H1 (cell line): ENCODE measurements at regions of chr13 and their contacts with region 1.

Region 1: GRCh38 chr13:27339299-27339698 is 68.7 kb downstream of the RASL11A start:
- DNase-seq: peak in 1 of 2 experiments; percentile 77
- H3K4me3 ChIP-seq: no peak overlapping the region; a peak in 1 of 8 replicates
- H3K27ac ChIP-seq: no peak overlapping the region
- H3K4me1 ChIP-seq: peaks cover 7 to 22% (median 11%) of the 10 kb centered on the region in 4 experiments
- H3K27me3 ChIP-seq: peaks cover 0 to 3% (median 1%) of the 10 kb centered on the region in 4 experiments; a peak in 2 of 7 replicates
- CTCF ChIP-seq: peak; percentile 64 to 81 (median 70)
- EP300 ChIP-seq: no peak
- POLR2A ChIP-seq: no peak
- RAD21 ChIP-seq: peak; percentile 53

Region 2: GRCh38 chr13:27296496-27296895 is 42.8 kb before region 1 on chr13:
- CTCF ChIA-PET with region 1: interaction called, 10 read pairs
- POLR2A ChIA-PET with region 1: interaction called, 3 read pairs
- DNase-seq: no peak
- H3K4me3 ChIP-seq: no peak overlapping the region
- H3K27ac ChIP-seq: no peak overlapping the region
- H3K4me1 ChIP-seq: no peaks in the 10 kb centered on the region
- H3K27me3 ChIP-seq: no peaks in the 10 kb centered on the region
- CTCF ChIP-seq: no peak
- EP300 ChIP-seq: no peak
- POLR2A ChIP-seq: no peak
- RAD21 ChIP-seq: no peak

Region 3: GRCh38 chr13:27329210-27329609 is 10.1 kb before region 1 on chr13:
- CTCF ChIA-PET with region 1: interaction called, 10 read pairs
- POLR2A ChIA-PET with region 1: no interaction called
- DNase-seq: no peak
- H3K4me3 ChIP-seq: no peak overlapping the region
- H3K27ac ChIP-seq: no peak overlapping the region
- H3K4me1 ChIP-seq: no peaks in the 10 kb centered on the region
- H3K27me3 ChIP-seq: no peaks in the 10 kb centered on the region
- CTCF ChIP-seq: no peak
- EP300 ChIP-seq: no peak
- POLR2A ChIP-seq: no peak
- RAD21 ChIP-seq: no peak

Region 4: GRCh38 chr13:27353166-27353583 is 13.9 kb after region 1 on chr13:
- CTCF ChIA-PET with region 1: interaction called, 95 read pairs
- POLR2A ChIA-PET with region 1: interaction called, 3 read pairs
- DNase-seq: no peak
- H3K4me3 ChIP-seq: no peak overlapping the region
- H3K27ac ChIP-seq: no peak overlapping the region
- H3K4me1 ChIP-seq: peaks cover 2 to 7% (median 5%) of the 10 kb centered on the region in 4 experiments; a peak in 5 of 7 replicates
- H3K27me3 ChIP-seq: no peaks in the 10 kb centered on the region
- CTCF ChIP-seq: no peak
- EP300 ChIP-seq: no peak
- POLR2A ChIP-seq: no peak
- RAD21 ChIP-seq: no peak

Region 5: GRCh38 chr13:27372896-27373295 is 33.6 kb after region 1 on chr13:
- CTCF ChIA-PET with region 1: no interaction called
- POLR2A ChIA-PET with region 1: no interaction called
- DNase-seq: no peak
- H3K4me3 ChIP-seq: no peak overlapping the region
- H3K27ac ChIP-seq: no peak overlapping the region
- H3K4me1 ChIP-seq: peaks cover 0 to 5% (median 3%) of the 10 kb centered on the region in 4 experiments; a peak in 2 of 7 replicates
- H3K27me3 ChIP-seq: peaks cover 0 to 3% (median 1%) of the 10 kb centered on the region in 4 experiments; a peak in 2 of 7 replicates
- CTCF ChIP-seq: peak; percentile 11 to 28 (median 13); a peak in 3 of 4 replicates
- EP300 ChIP-seq: no peak
- POLR2A ChIP-seq: no peak
- RAD21 ChIP-seq: peak; percentile 26 to 46